A673 (cell line): ENCODE measurements at regions of chr14 and their contacts with region 1.

Region 1: GRCh38 chr14:85764822-85765221 is 234.9 kb downstream of the FLRT2 start:
- DNase-seq: no peak
- H3K4me3 ChIP-seq: no peak overlapping the region
- H3K27ac ChIP-seq: no peak overlapping the region
- H3K4me1 ChIP-seq: peaks cover 10% of the 10 kb centered on the region
- H3K27me3 ChIP-seq: no peaks in the 10 kb centered on the region
- CTCF ChIP-seq: no peak

Region 2: GRCh38 chr14:85241022-85241855 is 523.6 kb before region 1 on chr14:
- CTCF ChIA-PET with region 1: no interaction called
- POLR2A ChIA-PET with region 1: no interaction called
- intact Hi-C with region 1: loop called (anchors 10 kb)
- DNase-seq: peak; percentile 35
- H3K4me3 ChIP-seq: no peak overlapping the region
- H3K27ac ChIP-seq: no peak overlapping the region
- H3K4me1 ChIP-seq: no peaks in the 10 kb centered on the region
- H3K27me3 ChIP-seq: no peaks in the 10 kb centered on the region
- CTCF ChIP-seq: no peak

Region 3: GRCh38 chr14:85811340-85811739 is 46.5 kb after region 1 on chr14:
- CTCF ChIA-PET with region 1: no interaction called
- POLR2A ChIA-PET with region 1: no interaction called
- intact Hi-C with region 1: no loop called
- DNase-seq: no peak
- H3K4me3 ChIP-seq: no peak overlapping the region
- H3K27ac ChIP-seq: no peak overlapping the region
- H3K4me1 ChIP-seq: no peaks in the 10 kb centered on the region
- H3K27me3 ChIP-seq: no peaks in the 10 kb centered on the region
- CTCF ChIP-seq: no peak